Mucosa of descending colon (tissue), 3 donors: ENCODE measurements at regions of chr21 and their contacts with region 1.

Region 1: DNA sequence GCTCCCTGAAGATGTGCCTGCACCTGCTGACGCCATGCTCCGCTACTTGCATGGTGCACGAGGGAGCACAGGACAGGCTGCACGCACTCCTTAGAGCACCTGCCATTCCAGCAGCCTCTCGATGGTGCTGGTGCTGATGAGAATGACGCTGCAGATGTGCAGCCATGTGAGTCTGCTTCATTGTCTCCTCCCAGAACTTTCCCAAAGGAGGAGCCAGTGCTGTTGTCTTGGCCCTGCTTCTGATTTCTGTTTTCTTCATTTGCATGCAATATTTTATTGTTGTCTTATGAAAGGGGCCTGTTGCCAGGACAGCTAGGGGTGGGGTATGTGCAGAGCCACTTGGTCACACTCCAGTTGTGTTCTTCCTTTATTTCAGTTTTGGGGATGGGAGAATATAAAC is 70.1 kb downstream of the PCBP3 start:
- DNase-seq: peak in 1 of 3 donors; percentile 20
- ATAC-seq: no peak
- H3K4me3 ChIP-seq: no peak overlapping the region
- H3K4me1 ChIP-seq: no peaks in the 10 kb centered on the region
- CTCF ChIP-seq: no peak

Region 2: GRCh38 chr21:45747802-45748445 is 34.3 kb after region 1 on chr21:
- intact Hi-C with region 1: loop called in 1 of 2 experiments (anchors 2 kb)
- DNase-seq: no peak
- ATAC-seq: no peak
- H3K4me3 ChIP-seq: no peak overlapping the region
- H3K4me1 ChIP-seq: no peaks in the 10 kb centered on the region
- CTCF ChIP-seq: no peak